Gastrocnemius medialis (tissue), 4 donors: ENCODE measurements at regions of chr19 and their contacts with region 1.

Region 1: DNA sequence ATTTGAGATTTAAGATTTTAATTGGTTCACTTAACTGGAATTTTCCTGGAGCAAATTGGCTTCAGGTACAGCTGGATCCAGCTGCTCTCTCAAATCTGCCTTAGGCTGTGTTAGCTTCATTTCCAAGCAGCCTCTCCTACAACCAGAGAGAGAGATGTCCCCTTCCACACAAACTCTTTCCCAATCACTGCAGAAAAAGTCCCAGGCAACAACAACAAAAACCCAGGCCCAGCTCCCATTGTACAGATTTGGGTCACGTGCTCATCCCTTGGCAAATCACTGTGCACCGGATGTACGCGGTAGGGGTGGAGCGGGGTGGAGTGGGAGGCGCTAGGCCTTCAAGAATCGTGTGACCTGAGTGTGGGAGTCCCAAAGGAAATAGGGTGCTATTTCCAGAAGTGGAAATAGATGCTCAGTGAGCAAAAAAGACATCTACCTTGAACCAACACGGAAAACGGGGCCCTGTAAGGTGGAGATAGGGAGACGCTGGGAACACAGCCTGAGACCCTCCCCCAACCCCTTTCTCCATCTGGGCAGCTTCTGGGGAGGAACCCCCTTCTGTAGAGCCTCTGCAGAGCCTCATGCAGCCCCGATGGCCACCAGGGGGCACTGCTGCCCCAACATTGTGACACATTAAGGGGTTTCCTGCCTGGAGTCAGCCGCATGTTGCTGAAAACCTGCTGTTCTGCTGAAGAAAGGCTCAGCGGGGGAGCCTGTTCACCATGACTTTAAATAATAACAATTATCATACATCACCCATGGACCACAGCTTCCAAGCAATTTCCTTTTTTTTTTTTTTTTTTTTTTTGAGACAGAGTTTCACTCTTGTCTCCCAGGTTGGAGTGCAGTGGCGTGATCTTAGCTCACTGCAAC is 25.4 kb downstream of the HPN start:
- DNase-seq: peak; percentile 72 to 84
- ATAC-seq: peak; percentile 59 to 79
- H3K4me3 ChIP-seq: no peak overlapping the region
- H3K27ac ChIP-seq: peak overlapping the region; percentile 52 to 80 (median 60)
- H3K4me1 ChIP-seq: peaks cover 22 to 34% of the 10 kb centered on the region in 2 donors
- H3K27me3 ChIP-seq: no peaks in the 10 kb centered on the region
- CTCF ChIP-seq: peak; percentile 89 to 96 (median 94)
- POLR2A ChIP-seq: peak in 1 of 2 donors; percentile 36

Region 2: GRCh38 chr19:35030257-35031071 is 36.5 kb before region 1 on chr19 and contains the start of gene SCN1B:
- in situ Hi-C with region 1: no loop called
- intact Hi-C with region 1: loop called (anchors 1 kb)
- DNase-seq: peak; percentile 61 to 80
- ATAC-seq: peak; percentile 60 to 67
- H3K4me3 ChIP-seq: peak within 1 kb of the TSS; percentile 55 to 78 (median 68)
- H3K27ac ChIP-seq: peak within 1 kb of the TSS; percentile 97 to 98 (median 98)
- H3K4me1 ChIP-seq: peaks cover 61 to 62% of the 10 kb centered on the region in 2 donors
- H3K27me3 ChIP-seq: no peaks in the 10 kb centered on the region
- CTCF ChIP-seq: no peak
- POLR2A ChIP-seq: peak; percentile 74 to 81
- total RNA-seq, gene SCN1B: 194 to 469 (median 289) TPM

Region 3: DNA sequence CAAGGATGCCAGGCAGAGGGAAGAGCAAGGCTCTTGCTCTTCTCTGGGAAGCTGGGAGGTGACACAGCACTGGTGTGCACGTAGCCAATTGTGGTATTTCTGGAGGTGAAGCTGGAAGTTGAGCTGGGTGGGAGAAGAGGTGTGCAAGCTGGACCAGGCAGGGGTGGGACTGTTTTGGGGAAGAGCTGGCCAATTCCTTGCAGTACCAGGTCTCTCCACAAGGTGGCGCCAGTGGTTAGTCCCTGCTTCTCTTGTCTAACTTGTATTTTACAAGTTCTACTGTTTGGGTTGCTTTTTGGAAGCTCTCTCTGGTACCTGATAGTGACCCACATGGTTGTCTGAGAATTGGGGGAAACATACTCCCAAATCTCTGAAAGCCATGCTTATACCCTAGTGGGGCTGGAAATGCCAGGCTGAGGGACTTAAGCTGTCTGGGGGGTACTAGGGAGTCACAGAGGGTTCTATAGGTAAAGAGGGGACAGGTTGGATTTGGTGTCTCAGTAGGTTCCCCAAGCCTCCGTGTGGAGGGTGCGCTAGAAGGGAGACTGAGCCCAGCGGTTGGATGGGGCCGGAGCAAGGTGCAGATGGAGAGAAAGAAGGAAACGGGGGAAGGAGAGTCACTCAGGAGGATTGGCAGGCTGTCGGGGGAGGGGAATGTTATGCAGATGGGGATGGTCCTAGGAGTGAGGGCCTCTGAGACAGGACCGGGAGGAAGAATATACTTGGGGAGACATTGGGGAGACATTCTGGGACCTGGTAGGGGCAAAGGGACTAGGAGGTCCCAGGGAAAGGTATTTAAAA is 22.4 kb before region 1 on chr19:
- in situ Hi-C with region 1: no loop called
- intact Hi-C with region 1: loop called (anchors 2 kb)
- DNase-seq: peak in 1 of 2 donors; percentile 68
- ATAC-seq: no peak
- H3K4me3 ChIP-seq: no peak overlapping the region
- H3K27ac ChIP-seq: peak overlapping the region; percentile 97 to 98 (median 98)
- H3K4me1 ChIP-seq: peaks cover 59 to 63% of the 10 kb centered on the region in 2 donors
- H3K27me3 ChIP-seq: no peaks in the 10 kb centered on the region
- CTCF ChIP-seq: peak; percentile 96 to 98 (median 97)
- POLR2A ChIP-seq: no peak

Region 4: GRCh38 chr19:35090506-35091237 is 23.7 kb after region 1 on chr19:
- in situ Hi-C with region 1: no loop called
- intact Hi-C with region 1: loop called (anchors 1 kb)
- DNase-seq: peak; percentile 52 to 72
- ATAC-seq: peak; percentile 94 to 96
- H3K4me3 ChIP-seq: peak overlapping the region in 3 of 4 donors; percentile 4 to 35 (median 23)
- H3K27ac ChIP-seq: peak overlapping the region; percentile 31 to 61 (median 49)
- H3K4me1 ChIP-seq: peaks cover 9 to 15% of the 10 kb centered on the region in 2 donors
- H3K27me3 ChIP-seq: no peaks in the 10 kb centered on the region
- CTCF ChIP-seq: peak; percentile 72 to 77 (median 75)
- POLR2A ChIP-seq: no peak

Region 5: DNA sequence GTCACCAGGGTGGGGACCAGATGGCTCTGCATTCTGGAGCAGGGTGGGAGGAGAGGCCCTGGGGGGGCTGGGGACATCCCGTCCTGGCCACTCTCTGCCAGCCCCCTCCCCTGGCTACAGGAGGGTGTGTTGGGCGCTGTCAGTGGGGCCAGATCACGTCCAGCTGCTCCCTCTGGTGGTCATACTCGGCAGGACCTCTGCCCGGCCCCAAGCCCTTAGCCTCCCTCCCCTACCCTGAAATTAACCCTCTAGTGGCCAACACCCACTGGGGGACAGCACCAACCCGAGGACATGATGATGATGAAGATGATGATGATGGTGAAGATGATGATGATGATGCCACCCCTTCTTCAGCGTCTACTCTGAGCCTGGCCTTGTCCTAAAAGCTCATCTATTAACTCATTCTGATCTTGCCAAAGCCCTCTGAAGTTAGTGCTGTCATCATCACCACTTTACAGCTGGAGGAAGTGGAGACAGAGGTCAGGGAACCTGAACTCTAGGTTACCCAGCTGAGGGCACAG is 68.5 kb after region 1 on chr19:
- in situ Hi-C with region 1: loop called in 2 of 4 experiments (anchors 5 to 10 kb)
- intact Hi-C with region 1: loop called (anchors 2 kb)
- DNase-seq: peak; percentile 67 to 83
- ATAC-seq: peak; percentile 29 to 34
- H3K4me3 ChIP-seq: peak overlapping the region; percentile 46 to 53 (median 50)
- H3K27ac ChIP-seq: peak overlapping the region; percentile 99 to 100 (median 99)
- H3K4me1 ChIP-seq: peaks cover 33 to 38% of the 10 kb centered on the region in 2 donors
- H3K27me3 ChIP-seq: no peaks in the 10 kb centered on the region
- CTCF ChIP-seq: peak; percentile 94 to 98 (median 97)
- POLR2A ChIP-seq: no peak